ENCODE measurements at regions of chr5 and their contacts with region 1.

Region 1: GRCh38 chr5:142699184-142699720 is 13.4 kb upstream of the FGF1 start:
- DNase-seq: peak; percentile 94
- ATAC-seq: peak; percentile 75
- H3K4me3 Mint-ChIP-seq: no peak overlapping the region
- H3K27ac Mint-ChIP-seq: no peak overlapping the region
- H3K4me1 Mint-ChIP-seq: peaks cover 59% of the 10 kb centered on the region
- H3K27me3 Mint-ChIP-seq: no peaks in the 10 kb centered on the region
- CTCF ChIP-seq: peak; percentile 90

Region 2: DNA sequence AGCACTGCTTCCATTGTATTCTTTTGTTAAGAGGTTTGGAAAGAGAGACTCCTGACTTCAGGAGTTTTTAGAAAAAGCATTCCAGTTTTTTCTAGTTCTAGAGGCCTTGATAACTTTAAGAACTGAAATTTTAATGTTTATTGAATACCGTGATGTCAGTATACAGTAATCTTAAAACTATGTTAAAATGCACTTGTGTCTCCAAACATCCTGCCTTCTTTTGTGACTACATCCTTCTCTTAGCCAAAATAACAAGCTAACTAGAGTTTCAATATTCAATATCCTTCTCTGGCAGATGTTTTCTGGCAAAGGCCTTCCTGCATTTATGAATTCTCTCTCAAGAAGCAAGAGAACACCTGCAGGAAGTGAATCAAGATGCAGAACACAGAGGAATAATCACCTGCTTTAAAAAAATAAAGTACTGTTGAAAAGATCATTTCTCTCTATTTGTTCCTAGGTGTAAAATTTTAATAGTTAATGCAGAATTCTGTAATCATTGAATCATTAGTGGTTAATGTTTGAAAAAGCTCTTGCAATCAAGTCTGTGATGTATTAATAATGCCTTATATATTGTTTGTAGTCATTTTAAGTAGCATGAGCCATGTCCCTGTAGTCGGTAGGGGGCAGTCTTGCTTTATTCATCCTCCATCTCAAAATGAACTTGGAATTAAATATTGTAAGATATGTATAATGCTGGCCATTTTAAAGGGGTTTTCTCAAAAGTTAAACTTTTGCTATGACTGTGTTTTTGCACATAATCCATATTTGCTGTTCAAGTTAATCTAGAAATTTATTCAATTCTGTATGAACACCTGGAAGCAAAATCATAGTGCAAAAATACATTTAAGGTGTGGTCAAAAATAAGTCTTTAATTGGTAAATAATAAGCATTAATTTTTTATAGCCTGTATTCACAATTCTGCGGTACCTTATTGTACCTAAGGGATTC is 547.5 kb before region 1 on chr5:
- CTCF ChIA-PET with region 1: interaction called, 10 read pairs
- POLR2A ChIA-PET with region 1: no interaction called
- DNase-seq: peak; percentile 41
- ATAC-seq: peak; percentile 69
- H3K4me3 Mint-ChIP-seq: no peak overlapping the region
- H3K27ac Mint-ChIP-seq: 0 out of 2 replicates have a peak overlapping the region, but pooled peaks have one; percentile 53
- H3K4me1 Mint-ChIP-seq: peaks cover 51% of the 10 kb centered on the region
- H3K27me3 Mint-ChIP-seq: no peaks in the 10 kb centered on the region
- CTCF ChIP-seq: peak; percentile 85

Region 3: GRCh38 chr5:142568283-142568995 is 130.8 kb before region 1 on chr5:
- CTCF ChIA-PET with region 1: no interaction called
- POLR2A ChIA-PET with region 1: no interaction called
- DNase-seq: no peak
- ATAC-seq: no peak
- H3K4me3 Mint-ChIP-seq: no peak overlapping the region
- H3K27ac Mint-ChIP-seq: 0 out of 2 replicates have a peak overlapping the region, but pooled peaks have one; percentile 40
- H3K4me1 Mint-ChIP-seq: peaks cover 8% of the 10 kb centered on the region
- H3K27me3 Mint-ChIP-seq: no peaks in the 10 kb centered on the region
- CTCF ChIP-seq: no peak

Region 4: GRCh38 chr5:142611154-142611553 is 88.1 kb before region 1 on chr5:
- CTCF ChIA-PET with region 1: interaction called, 41 read pairs
- POLR2A ChIA-PET with region 1: no interaction called
- DNase-seq: peak; percentile 85
- ATAC-seq: peak; percentile 97; the same call in 1 of the 2 replicates
- H3K4me3 Mint-ChIP-seq: no peak overlapping the region
- H3K27ac Mint-ChIP-seq: no peak overlapping the region
- H3K4me1 Mint-ChIP-seq: peaks cover 9% of the 10 kb centered on the region
- H3K27me3 Mint-ChIP-seq: no peaks in the 10 kb centered on the region
- CTCF ChIP-seq: peak; percentile 79

Region 5: GRCh38 chr5:142685418-142686209 is 13.6 kb before region 1 on chr5 and contains the start of gene FGF1:
- CTCF ChIA-PET with region 1: interaction called, 28 read pairs
- POLR2A ChIA-PET with region 1: interaction called, 3 read pairs
- DNase-seq: no peak
- ATAC-seq: no peak; the same call in 1 of the 2 replicates
- H3K4me3 Mint-ChIP-seq: no peak within 1 kb of the TSS
- H3K27ac Mint-ChIP-seq: peak within 1 kb of the TSS; percentile 93
- H3K4me1 Mint-ChIP-seq: peaks cover 50% of the 10 kb centered on the region
- H3K27me3 Mint-ChIP-seq: no peaks in the 10 kb centered on the region
- CTCF ChIP-seq: no peak
- total RNA-seq, gene FGF1: 0.21 to 0.55 TPM in 2 of 3 replicates, not detected in the other

Region 6: GRCh38 chr5:142743592-142744441 is 44.6 kb after region 1 on chr5:
- CTCF ChIA-PET with region 1: no interaction called
- POLR2A ChIA-PET with region 1: no interaction called
- DNase-seq: no peak
- ATAC-seq: peak; percentile 68
- H3K4me3 Mint-ChIP-seq: no peak overlapping the region
- H3K27ac Mint-ChIP-seq: peak overlapping the region; percentile 29
- H3K4me1 Mint-ChIP-seq: peaks cover 29% of the 10 kb centered on the region
- H3K27me3 Mint-ChIP-seq: peaks cover under 1% of the 10 kb centered on the region; the same call in 1 of the 2 replicates
- CTCF ChIP-seq: no peak